MCF 10A (cell line): ENCODE measurements at regions of chr17 and their contacts with region 1.

Region 1: DNA sequence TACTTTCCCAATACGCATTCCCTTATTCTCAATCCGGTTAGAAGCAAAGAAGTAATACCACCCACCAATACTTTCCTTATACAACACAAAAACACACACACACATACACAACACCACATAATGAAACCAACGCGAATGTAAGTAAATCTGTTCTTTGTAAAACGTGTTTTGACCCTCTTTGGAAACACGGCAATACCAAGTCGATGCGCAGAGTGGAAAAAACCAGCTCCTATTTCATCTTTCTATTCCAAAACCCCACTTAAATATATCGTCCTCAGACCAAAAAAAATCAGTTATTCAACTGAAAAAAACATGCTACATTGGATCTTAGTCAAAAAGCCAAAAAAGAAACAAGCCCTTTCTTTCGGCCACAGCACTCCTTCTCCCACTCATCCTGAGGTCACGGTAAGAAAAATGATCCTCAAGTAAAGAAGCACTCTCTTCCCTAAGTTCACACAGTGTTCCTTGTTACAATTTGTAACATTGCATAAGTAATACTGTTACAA is 31.0 kb upstream of the ARL4D start:
- DNase-seq: peak; percentile 90
- H3K4me3 Mint-ChIP-seq: peak overlapping the region; percentile 73
- H3K27ac Mint-ChIP-seq: peak overlapping the region; percentile 100
- H3K4me1 Mint-ChIP-seq: peaks cover 16% of the 10 kb centered on the region
- H3K27me3 Mint-ChIP-seq: no peaks in the 10 kb centered on the region
- CTCF ChIP-seq: no peak

Region 2: GRCh38 chr17:41786227-41787020 is 1581.4 kb before region 1 on chr17 and contains the start of gene JUP:
- CTCF ChIA-PET with region 1: no interaction called
- POLR2A ChIA-PET with region 1: no interaction called
- intact Hi-C with region 1: no loop called
- DNase-seq: peak; percentile 100
- H3K4me3 Mint-ChIP-seq: peak within 1 kb of the TSS; percentile 74
- H3K27ac Mint-ChIP-seq: peak within 1 kb of the TSS; percentile 70
- H3K4me1 Mint-ChIP-seq: peaks cover 33% of the 10 kb centered on the region
- H3K27me3 Mint-ChIP-seq: no peaks in the 10 kb centered on the region
- CTCF ChIP-seq: peak; percentile 77
- total RNA-seq, gene JUP: 112 and 131 TPM in 2 replicates

Region 3: GRCh38 chr17:43316522-43317142 is 51.2 kb before region 1 on chr17:
- CTCF ChIA-PET with region 1: no interaction called
- POLR2A ChIA-PET with region 1: interaction called, 18 read pairs
- intact Hi-C with region 1: no loop called
- DNase-seq: no peak
- H3K4me3 Mint-ChIP-seq: no peak overlapping the region
- H3K27ac Mint-ChIP-seq: no peak overlapping the region
- H3K4me1 Mint-ChIP-seq: peaks cover 7% of the 10 kb centered on the region
- H3K27me3 Mint-ChIP-seq: no peaks in the 10 kb centered on the region
- CTCF ChIP-seq: no peak

Region 4: GRCh38 chr17:43381204-43381603 is 13.4 kb after region 1 on chr17:
- CTCF ChIA-PET with region 1: interaction called, 6 read pairs
- POLR2A ChIA-PET with region 1: interaction called, 350 read pairs
- intact Hi-C with region 1: no loop called
- DNase-seq: no peak
- H3K4me3 Mint-ChIP-seq: no peak overlapping the region
- H3K27ac Mint-ChIP-seq: no peak overlapping the region
- H3K4me1 Mint-ChIP-seq: peaks cover 10% of the 10 kb centered on the region
- H3K27me3 Mint-ChIP-seq: no peaks in the 10 kb centered on the region
- CTCF ChIP-seq: no peak

Region 5: DNA sequence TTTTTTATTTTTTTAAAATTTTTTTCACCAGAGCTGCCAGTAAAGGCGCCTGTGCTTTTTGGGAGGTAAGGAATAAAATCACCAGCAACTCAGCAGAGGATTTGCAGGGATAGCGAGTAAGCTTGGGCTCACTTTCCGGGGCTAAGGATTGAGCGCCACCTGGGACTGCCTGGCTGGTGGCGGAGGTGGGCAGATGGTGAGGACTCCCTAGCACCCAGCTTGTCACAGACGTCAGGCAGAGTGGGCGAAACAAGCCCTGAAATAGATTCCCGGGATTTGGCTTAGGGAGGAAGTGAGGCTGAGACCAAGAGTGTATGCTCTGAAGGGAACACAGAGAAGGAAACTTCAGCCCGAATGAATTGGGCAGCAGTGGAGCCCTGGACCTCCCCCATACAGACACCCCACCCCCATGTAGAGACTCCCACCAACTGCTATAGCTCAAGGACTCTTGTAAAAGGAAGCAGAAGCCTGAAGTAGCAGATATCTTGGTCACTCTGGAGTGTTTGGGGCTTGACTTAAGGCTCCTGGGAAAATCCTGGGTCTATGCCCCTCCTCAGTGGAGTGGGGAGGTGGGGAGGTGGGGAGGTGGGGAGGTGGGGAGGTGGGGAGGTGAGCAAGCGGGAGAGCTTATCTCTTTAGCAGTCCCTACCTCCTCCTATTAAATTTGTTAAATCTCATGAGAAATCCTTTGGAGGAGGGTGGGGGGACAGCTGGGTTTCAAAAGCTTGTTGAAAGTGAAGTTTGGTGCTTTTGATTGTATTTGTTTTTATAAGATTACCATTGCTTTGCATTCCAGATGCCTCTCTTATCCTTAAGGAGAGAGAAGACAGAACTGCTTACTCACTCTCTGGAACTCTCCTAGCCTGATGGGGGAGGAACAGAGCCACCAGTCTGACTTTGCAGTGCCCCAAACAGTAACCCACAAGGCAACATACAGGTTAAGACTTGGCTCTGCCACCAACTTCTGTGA is 39.2 kb after region 1 on chr17:
- CTCF ChIA-PET with region 1: no interaction called
- POLR2A ChIA-PET with region 1: interaction called, 86 read pairs
- intact Hi-C with region 1: no loop called
- DNase-seq: no peak
- H3K4me3 Mint-ChIP-seq: no peak overlapping the region
- H3K27ac Mint-ChIP-seq: no peak overlapping the region
- H3K4me1 Mint-ChIP-seq: peaks cover 28% of the 10 kb centered on the region
- H3K27me3 Mint-ChIP-seq: no peaks in the 10 kb centered on the region
- CTCF ChIP-seq: no peak

Region 6: DNA sequence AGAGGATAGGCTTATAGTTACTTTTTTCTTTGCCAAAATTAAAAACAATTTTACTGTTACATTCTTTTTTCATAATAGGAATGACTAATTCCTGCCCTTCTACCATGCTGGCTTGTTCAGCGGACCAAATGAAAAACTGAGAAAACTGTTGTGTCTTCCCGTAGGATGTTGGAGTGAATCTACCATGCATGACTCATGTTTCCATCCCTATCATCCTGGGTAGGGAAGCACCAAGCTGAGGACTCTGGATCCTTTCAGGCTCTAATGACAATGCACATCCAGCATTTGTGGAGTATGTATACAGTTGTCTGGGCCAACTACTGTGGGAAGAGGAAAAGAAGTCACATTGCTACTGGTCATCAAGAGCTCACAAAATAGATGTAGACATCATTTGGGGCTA is 74.9 kb after region 1 on chr17:
- CTCF ChIA-PET with region 1: interaction called, 3 read pairs
- POLR2A ChIA-PET with region 1: interaction called, 22 read pairs
- intact Hi-C with region 1: no loop called
- DNase-seq: peak; percentile 66
- H3K4me3 Mint-ChIP-seq: no peak overlapping the region
- H3K27ac Mint-ChIP-seq: no peak overlapping the region
- H3K4me1 Mint-ChIP-seq: peaks cover 22% of the 10 kb centered on the region
- H3K27me3 Mint-ChIP-seq: no peaks in the 10 kb centered on the region
- CTCF ChIP-seq: no peak

Region 7: DNA sequence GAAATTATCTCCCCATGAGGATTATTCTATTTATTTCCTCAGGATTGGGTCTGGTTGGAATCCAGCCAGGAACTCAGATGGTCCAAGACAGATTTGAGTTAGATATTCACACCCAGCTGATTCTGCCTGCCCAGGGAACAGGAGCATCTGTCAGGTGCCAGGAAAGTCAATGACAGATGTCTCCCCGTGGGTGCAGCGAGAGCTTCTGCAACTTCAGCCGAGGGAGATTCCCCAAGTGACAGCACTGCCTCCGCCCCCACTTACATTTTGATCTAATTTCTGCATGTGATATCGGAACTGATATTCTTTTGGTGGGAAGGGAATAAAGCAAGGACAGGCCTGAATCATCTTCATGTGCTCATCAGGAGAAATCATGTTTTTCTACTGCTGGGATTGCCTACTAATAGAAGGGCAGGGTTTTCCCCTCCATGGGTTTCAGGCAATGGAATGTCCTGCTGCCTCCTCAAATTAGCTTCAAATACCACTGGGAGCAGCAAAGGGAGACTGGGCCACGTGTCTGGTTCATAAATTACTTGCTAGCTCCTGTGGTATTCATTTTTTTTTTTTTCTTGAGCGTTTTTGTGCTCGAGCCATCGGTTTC is 100.3 kb after region 1 on chr17:
- CTCF ChIA-PET with region 1: no interaction called
- POLR2A ChIA-PET with region 1: interaction called, 31 read pairs
- intact Hi-C with region 1: no loop called
- DNase-seq: peak; percentile 55
- H3K4me3 Mint-ChIP-seq: peak overlapping the region; percentile 9
- H3K27ac Mint-ChIP-seq: peak overlapping the region; percentile 88
- H3K4me1 Mint-ChIP-seq: peaks cover 27% of the 10 kb centered on the region
- H3K27me3 Mint-ChIP-seq: no peaks in the 10 kb centered on the region
- CTCF ChIP-seq: no peak